Activated naive CD4-positive, alpha-beta T cell treated with anti-CD3 and anti-CD28 coated beads for 36 hours (primary cell): ENCODE measurements at regions of chr14 and their contacts with region 1.

Region 1: DNA sequence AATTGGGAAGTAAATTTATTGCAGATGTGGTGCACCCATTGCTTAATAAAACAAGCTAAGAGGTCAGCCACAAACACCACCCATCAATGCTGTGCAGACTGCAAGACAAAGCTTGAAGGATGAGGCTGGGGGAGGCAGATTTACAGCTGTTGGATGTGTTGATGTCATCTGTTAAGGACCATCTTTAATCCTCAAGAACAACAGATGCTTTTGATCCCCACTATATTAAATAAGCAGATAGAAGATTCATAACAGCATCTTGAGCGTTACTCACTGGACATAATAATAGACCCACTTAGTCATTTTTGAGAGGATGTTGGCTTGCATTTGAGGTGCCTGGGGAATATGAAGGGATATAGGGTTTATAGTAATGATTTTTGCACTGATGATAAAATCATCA is 58.8 kb downstream of the GPR68 start:
- DNase-seq: no peak
- H3K4me3 Mint-ChIP-seq: no peak overlapping the region
- H3K27ac Mint-ChIP-seq: no peak overlapping the region
- H3K4me1 Mint-ChIP-seq: no peaks in the 10 kb centered on the region
- H3K27me3 Mint-ChIP-seq: no peaks in the 10 kb centered on the region

Region 2: GRCh38 chr14:90739318-90740068 is 446.2 kb before region 1 on chr14:
- CTCF ChIA-PET with region 1: no interaction called
- intact Hi-C with region 1: no loop called
- DNase-seq: no peak
- H3K4me3 Mint-ChIP-seq: no peak overlapping the region
- H3K27ac Mint-ChIP-seq: no peak overlapping the region
- H3K4me1 Mint-ChIP-seq: no peaks in the 10 kb centered on the region
- H3K27me3 Mint-ChIP-seq: no peaks in the 10 kb centered on the region

Region 3: GRCh38 chr14:91286530-91286937 is 100.8 kb after region 1 on chr14:
- CTCF ChIA-PET with region 1: interaction called, 22 read pairs
- intact Hi-C with region 1: no loop called
- DNase-seq: peak; percentile 90
- H3K4me3 Mint-ChIP-seq: no peak overlapping the region
- H3K27ac Mint-ChIP-seq: peak overlapping the region; percentile 74
- H3K4me1 Mint-ChIP-seq: peaks cover 4% of the 10 kb centered on the region
- H3K27me3 Mint-ChIP-seq: no peaks in the 10 kb centered on the region